ENCODE measurements at regions of chr9 and their contacts with region 1.

Region 1: DNA sequence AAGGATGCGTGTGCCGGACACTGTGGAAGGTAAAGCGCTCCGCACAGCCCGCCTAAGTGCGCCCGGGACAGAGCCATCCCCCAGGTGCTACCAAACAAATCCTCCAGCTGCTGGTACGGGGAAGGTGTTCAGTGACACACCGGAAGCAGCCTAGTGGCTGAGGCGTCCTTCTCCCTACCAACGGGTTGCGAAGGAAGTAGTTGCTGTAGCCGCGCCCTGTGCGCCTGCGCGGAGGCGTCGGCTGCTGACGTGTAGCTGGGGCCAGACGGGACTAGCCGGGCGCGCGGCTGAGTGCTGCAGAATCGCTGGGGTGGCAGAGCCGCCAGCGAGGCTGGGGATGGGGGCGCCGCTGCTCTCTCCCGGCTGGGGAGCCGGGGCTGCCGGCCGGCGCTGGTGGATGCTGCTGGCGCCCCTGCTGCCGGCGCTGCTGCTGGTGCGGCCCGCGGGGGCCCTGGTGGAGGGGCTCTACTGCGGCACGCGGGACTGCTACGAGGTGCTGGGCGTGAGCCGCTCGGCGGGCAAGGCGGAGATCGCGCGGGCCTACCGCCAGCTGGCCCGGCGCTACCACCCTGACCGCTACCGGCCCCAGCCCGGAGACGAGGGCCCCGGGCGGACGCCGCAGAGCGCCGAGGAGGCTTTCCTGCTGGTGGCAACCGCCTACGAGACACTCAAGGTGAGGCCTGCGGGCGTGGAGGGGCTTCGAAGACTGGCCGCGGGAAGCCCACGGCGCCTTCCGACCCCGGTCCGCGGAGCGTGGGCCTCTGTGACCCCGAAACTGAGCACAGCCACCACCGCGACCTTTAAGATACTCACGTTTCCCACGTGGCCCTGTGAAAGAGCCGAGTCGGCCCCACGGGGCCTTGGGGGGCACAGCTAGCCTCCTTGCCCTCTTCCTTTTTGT is at the start of gene DNAJC25:
- DNase-seq: peak; percentile 96 to 98 (median 98)
- ATAC-seq: peak; percentile 99 to 100 (median 100)
- H3K4me3 ChIP-seq: peak within 1 kb of the TSS; percentile 84 to 99 (median 93)
- H3K27ac ChIP-seq: peak within 1 kb of the TSS; percentile 41 to 94 (median 87)
- H3K4me1 ChIP-seq: peaks cover 3 to 51% (median 25%) of the 10 kb centered on the region in 12 donors
- H3K27me3 ChIP-seq: no peaks in the 10 kb centered on the region
- CTCF ChIP-seq: peak in 2 of 12 donors; percentile 8 to 11
- POLR2A ChIP-seq: peak; percentile 99 to 100
- total RNA-seq, gene DNAJC25: 3.9 to 7.3 (median 5.0) TPM

Region 2: GRCh38 chr9:111691672-111692329 is 60.5 kb after region 1 on chr9:
- intact Hi-C with region 1: loop called in 1 of 10 experiments (anchors 10 kb)
- DNase-seq: no peak
- ATAC-seq: no peak
- H3K4me3 ChIP-seq: no peak overlapping the region
- H3K27ac ChIP-seq: no peak overlapping the region
- H3K4me1 ChIP-seq: peaks cover 0 to 4% (median 0%) of the 10 kb centered on the region in 12 donors
- H3K27me3 ChIP-seq: no peaks in the 10 kb centered on the region
- CTCF ChIP-seq: peak in 7 of 12 donors; percentile 14 to 50 (median 32)
- POLR2A ChIP-seq: no peak

Region 3: DNA sequence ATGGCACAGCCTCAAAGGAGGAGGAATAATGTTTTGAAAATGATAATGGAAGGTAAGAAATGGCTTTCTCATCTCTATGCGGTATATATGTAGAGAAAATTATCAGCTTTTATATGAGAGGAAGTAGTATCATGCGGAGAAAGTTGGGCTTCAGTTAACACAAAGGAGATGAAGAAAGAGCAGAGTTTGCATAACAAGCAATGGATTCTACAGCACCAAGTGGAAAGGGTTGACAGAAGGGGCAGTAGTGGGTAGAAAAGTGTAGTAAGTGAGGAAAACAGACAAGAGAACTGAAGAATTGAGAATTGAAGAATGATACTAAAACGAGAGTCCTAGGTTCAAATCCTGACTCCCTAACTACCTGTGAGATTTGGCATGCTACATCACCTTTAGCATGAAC is 81.0 kb after region 1 on chr9:
- intact Hi-C with region 1: no loop called
- DNase-seq: no peak
- ATAC-seq: no peak
- H3K4me3 ChIP-seq: no peak overlapping the region
- H3K27ac ChIP-seq: no peak overlapping the region
- H3K4me1 ChIP-seq: no peaks in the 10 kb centered on the region
- H3K27me3 ChIP-seq: no peaks in the 10 kb centered on the region
- CTCF ChIP-seq: no peak
- POLR2A ChIP-seq: no peak

Measured in heart left ventricle (tissue), 16 donors.